CD4-positive, alpha-beta memory T cell (primary cell): ENCODE measurements at regions of chr1 and their contacts with region 1.

Region 1: GRCh38 chr1:11838349-11839272 is 9.0 kb downstream of the NPPA start:
- DNase-seq: peak; percentile 65 to 74 (median 72)
- H3K4me3 ChIP-seq: no peak overlapping the region
- H3K4me3 Mint-ChIP-seq: no peak overlapping the region
- H3K27ac ChIP-seq: no peak overlapping the region
- H3K27ac Mint-ChIP-seq: peak overlapping the region in 1 of 7 donors; percentile 24
- H3K4me1 ChIP-seq: peaks cover 3% of the 10 kb centered on the region
- H3K4me1 Mint-ChIP-seq: peaks cover 2 to 6% (median 4%) of the 10 kb centered on the region in 4 donors
- H3K27me3 ChIP-seq: no peaks in the 10 kb centered on the region
- H3K27me3 Mint-ChIP-seq: no peaks in the 10 kb centered on the region

Region 2: GRCh38 chr1:11806307-11806936 is 32.2 kb before region 1 on chr1:
- CTCF ChIA-PET with region 1: no interaction called
- POLR2A ChIA-PET with region 1: no interaction called
- intact Hi-C with region 1: no loop called
- DNase-seq: no peak
- H3K4me3 ChIP-seq: peak overlapping the region; percentile 37 to 86
- H3K4me3 Mint-ChIP-seq: peak overlapping the region; percentile 96 to 100 (median 98)
- H3K27ac ChIP-seq: peak overlapping the region; percentile 73
- H3K27ac Mint-ChIP-seq: peak overlapping the region; percentile 92 to 100 (median 99)
- H3K4me1 ChIP-seq: peaks cover 55% of the 10 kb centered on the region
- H3K4me1 Mint-ChIP-seq: peaks cover 35 to 72% (median 56%) of the 10 kb centered on the region in 4 donors
- H3K27me3 ChIP-seq: no peaks in the 10 kb centered on the region
- H3K27me3 Mint-ChIP-seq: no peaks in the 10 kb centered on the region

Region 3: GRCh38 chr1:11893907-11894251 is 55.3 kb after region 1 on chr1:
- CTCF ChIA-PET with region 1: interaction called, 40 read pairs
- POLR2A ChIA-PET with region 1: no interaction called
- intact Hi-C with region 1: loop called (anchors 1 kb)
- DNase-seq: peak; percentile 58 to 67 (median 58)
- H3K4me3 ChIP-seq: no peak overlapping the region
- H3K4me3 Mint-ChIP-seq: no peak overlapping the region
- H3K27ac ChIP-seq: no peak overlapping the region
- H3K27ac Mint-ChIP-seq: no peak overlapping the region
- H3K4me1 ChIP-seq: peaks cover 5% of the 10 kb centered on the region
- H3K4me1 Mint-ChIP-seq: no peaks in the 10 kb centered on the region
- H3K27me3 ChIP-seq: peaks cover 12% of the 10 kb centered on the region
- H3K27me3 Mint-ChIP-seq: peaks cover 18 to 26% of the 10 kb centered on the region in 2 donors

Region 4: GRCh38 chr1:11918779-11919519 is 80.3 kb after region 1 on chr1:
- CTCF ChIA-PET with region 1: no interaction called
- POLR2A ChIA-PET with region 1: no interaction called
- intact Hi-C with region 1: no loop called
- DNase-seq: no peak
- H3K4me3 ChIP-seq: no peak overlapping the region
- H3K4me3 Mint-ChIP-seq: no peak overlapping the region
- H3K27ac ChIP-seq: no peak overlapping the region
- H3K27ac Mint-ChIP-seq: no peak overlapping the region
- H3K4me1 ChIP-seq: peaks cover 25% of the 10 kb centered on the region
- H3K4me1 Mint-ChIP-seq: peaks cover 16 to 40% (median 24%) of the 10 kb centered on the region in 4 donors
- H3K27me3 ChIP-seq: no peaks in the 10 kb centered on the region
- H3K27me3 Mint-ChIP-seq: no peaks in the 10 kb centered on the region

Region 5: GRCh38 chr1:11967028-11967547 is 128.5 kb after region 1 on chr1:
- CTCF ChIA-PET with region 1: no interaction called
- POLR2A ChIA-PET with region 1: no interaction called
- intact Hi-C with region 1: loop called (anchors 1 kb)
- DNase-seq: no peak
- H3K4me3 ChIP-seq: no peak overlapping the region
- H3K4me3 Mint-ChIP-seq: no peak overlapping the region
- H3K27ac ChIP-seq: no peak overlapping the region
- H3K27ac Mint-ChIP-seq: no peak overlapping the region
- H3K4me1 ChIP-seq: no peaks in the 10 kb centered on the region
- H3K4me1 Mint-ChIP-seq: no peaks in the 10 kb centered on the region
- H3K27me3 ChIP-seq: no peaks in the 10 kb centered on the region
- H3K27me3 Mint-ChIP-seq: no peaks in the 10 kb centered on the region

Region 6: DNA sequence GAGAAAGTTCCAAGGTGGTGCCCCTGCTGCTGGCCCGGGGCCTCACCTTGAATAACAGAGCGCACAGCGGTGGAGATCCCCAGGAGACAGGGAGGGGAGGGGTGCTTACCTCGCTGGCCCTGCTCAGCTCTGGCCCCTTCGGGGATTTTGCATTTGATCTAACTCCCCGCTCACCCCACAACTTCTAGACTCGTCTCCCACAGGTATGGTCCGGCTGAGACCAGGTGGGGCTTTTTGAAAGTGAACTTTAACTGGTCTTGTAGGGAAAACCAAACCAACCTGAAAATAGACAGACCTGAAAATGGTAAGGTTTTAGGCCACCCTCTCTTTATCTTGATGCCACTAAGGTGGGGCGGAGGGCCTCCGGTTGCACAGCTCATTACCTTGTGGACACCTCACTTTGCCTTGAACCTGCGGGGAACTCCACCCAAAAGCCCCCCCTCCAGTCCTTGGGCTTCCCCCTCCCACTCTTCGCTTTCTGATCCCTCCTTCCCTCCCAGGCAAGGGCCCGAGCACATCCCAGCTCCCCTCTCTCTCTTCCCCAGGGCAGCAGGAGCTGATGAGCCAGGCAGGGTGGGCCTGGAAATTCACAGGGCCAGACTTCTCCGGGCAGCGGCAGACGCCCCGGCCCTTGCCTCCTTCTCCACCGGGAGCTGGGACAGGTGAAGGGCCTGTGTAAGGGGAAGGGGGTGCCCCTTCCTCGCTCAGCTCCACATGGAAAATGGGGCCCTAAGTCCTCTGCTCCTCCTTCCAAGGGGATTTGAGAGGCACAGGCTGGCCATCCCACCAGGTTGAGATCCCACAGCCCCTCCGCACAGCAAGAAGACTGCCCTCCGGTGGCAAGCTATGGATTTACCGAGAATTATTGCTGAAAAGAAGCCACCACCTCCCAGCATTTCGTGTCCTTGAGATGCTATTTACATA is 240.6 kb after region 1 on chr1:
- CTCF ChIA-PET with region 1: no interaction called
- POLR2A ChIA-PET with region 1: no interaction called
- intact Hi-C with region 1: loop called (anchors 2 kb)
- DNase-seq: peak in 4 of 5 donors; percentile 22 to 37 (median 30)
- H3K4me3 ChIP-seq: peak overlapping the region in 1 of 2 donors; percentile 34
- H3K4me3 Mint-ChIP-seq: peak overlapping the region in 7 of 8 donors; percentile 39 to 71 (median 64)
- H3K27ac ChIP-seq: peak overlapping the region; percentile 23
- H3K27ac Mint-ChIP-seq: peak overlapping the region in 4 of 7 donors; percentile 15 to 73 (median 42)
- H3K4me1 ChIP-seq: peaks cover 30% of the 10 kb centered on the region
- H3K4me1 Mint-ChIP-seq: peaks cover 18 to 35% (median 23%) of the 10 kb centered on the region in 4 donors
- H3K27me3 ChIP-seq: no peaks in the 10 kb centered on the region
- H3K27me3 Mint-ChIP-seq: peaks cover 0 to 11% of the 10 kb centered on the region in 2 donors